ENCODE measurements at regions of chr5 and their contacts with region 1.

Region 1: DNA sequence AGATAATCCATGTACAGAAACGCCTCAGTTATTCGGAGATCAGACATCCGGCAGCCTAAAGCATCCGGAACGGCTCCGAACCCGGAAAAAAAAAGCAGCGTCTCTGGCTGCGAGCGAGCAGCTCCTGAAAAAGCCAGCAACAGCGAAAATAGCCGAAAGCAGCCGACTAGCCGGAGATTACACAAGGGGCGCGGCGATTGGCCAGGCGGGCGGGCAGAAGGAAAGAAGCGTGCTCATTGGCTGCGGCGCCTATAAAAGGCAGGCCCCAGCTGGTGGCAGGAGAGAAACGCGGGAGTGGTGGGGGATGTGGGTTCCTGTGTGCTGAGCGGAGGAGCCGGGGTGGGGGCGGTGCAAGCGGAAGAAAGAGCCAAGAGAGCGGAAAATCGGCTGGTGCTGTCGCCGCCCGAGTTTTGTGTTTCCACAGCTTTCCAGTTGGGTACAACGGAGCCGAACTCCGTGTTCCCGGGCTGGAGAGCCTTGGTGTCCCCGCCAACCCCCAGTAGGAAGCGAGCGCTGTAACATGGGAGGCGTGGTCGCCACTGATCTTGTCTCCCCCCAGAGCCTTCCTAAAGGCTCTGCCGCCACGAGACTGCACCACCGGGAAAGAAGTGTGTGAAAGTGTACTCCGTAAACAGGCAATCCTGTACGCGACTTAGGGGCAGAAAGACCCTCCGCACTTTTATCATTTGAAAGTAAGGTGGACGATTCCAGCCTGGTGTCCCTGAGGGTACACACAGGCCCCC is at the start of gene ARL15:
- DNase-seq: peak; percentile 93 to 98
- H3K4me3 ChIP-seq: peak within 1 kb of the TSS; percentile 77 to 84
- H3K27ac ChIP-seq: peak within 1 kb of the TSS; percentile 71 to 75
- H3K4me1 ChIP-seq: peaks cover 0 to 7% of the 10 kb centered on the region in 2 donors
- H3K27me3 ChIP-seq: no peaks in the 10 kb centered on the region
- CTCF ChIP-seq: no peak
- total RNA-seq, gene ARL15: 12.5 TPM

Region 2: DNA sequence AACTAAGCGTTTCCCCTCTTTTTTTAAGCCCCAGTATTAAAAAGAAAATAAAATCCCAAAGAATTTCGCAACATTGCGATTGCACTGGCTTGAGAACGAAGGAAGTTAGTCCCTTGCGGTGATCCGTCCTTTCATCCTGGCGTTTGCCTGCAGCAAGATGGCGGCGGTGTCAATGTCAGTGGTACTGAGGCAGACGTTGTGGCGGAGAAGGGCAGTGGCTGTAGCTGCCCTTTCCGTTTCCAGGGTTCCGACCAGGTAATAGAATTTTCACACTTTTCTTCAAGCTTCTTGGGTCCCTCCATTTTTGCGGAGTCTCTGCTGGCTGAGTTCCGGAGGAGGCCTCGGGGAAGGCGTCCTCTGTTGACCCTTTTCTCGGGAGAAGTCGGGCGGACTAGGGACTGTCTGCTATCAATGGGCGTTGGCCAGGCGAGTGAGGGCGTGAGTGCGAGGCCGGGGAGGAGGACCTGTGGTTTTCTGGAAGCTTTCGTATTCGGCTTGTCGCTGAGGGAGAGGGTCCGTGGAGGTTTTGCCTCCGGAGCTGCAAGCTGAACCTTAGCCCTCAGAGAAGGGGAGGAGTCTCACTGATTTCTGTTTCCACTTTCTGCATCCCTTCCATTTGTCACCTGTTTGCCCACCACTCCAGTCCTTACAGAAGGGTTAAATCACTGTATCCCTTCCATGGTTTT is 750.0 kb before region 1 on chr5 and contains the start of gene NDUFS4:
- intact Hi-C with region 1: loop called (anchors 10 kb)
- DNase-seq: peak; percentile 16 to 89
- H3K4me3 ChIP-seq: peak within 1 kb of the TSS; percentile 78 to 83
- H3K27ac ChIP-seq: peak within 1 kb of the TSS; percentile 73 to 80
- H3K4me1 ChIP-seq: peaks cover 0 to 10% of the 10 kb centered on the region in 2 donors
- H3K27me3 ChIP-seq: no peaks in the 10 kb centered on the region
- CTCF ChIP-seq: no peak
- total RNA-seq, gene NDUFS4: 3.0 TPM

Region 3: GRCh38 chr5:54080831-54081230 is 229.8 kb before region 1 on chr5:
- intact Hi-C with region 1: no loop called
- DNase-seq: no peak
- H3K4me3 ChIP-seq: no peak overlapping the region
- H3K27ac ChIP-seq: no peak overlapping the region
- H3K4me1 ChIP-seq: no peaks in the 10 kb centered on the region
- H3K27me3 ChIP-seq: no peaks in the 10 kb centered on the region
- CTCF ChIP-seq: no peak

Region 4: GRCh38 chr5:54387659-54388232 is 77.1 kb after region 1 on chr5:
- intact Hi-C with region 1: loop called (anchors 2 kb)
- DNase-seq: no peak
- H3K4me3 ChIP-seq: peak overlapping the region in 1 of 2 donors; percentile 0
- H3K27ac ChIP-seq: peak overlapping the region; percentile 39 to 70
- H3K4me1 ChIP-seq: peaks cover 4 to 10% of the 10 kb centered on the region in 2 donors
- H3K27me3 ChIP-seq: no peaks in the 10 kb centered on the region
- CTCF ChIP-seq: no peak

Region 5: DNA sequence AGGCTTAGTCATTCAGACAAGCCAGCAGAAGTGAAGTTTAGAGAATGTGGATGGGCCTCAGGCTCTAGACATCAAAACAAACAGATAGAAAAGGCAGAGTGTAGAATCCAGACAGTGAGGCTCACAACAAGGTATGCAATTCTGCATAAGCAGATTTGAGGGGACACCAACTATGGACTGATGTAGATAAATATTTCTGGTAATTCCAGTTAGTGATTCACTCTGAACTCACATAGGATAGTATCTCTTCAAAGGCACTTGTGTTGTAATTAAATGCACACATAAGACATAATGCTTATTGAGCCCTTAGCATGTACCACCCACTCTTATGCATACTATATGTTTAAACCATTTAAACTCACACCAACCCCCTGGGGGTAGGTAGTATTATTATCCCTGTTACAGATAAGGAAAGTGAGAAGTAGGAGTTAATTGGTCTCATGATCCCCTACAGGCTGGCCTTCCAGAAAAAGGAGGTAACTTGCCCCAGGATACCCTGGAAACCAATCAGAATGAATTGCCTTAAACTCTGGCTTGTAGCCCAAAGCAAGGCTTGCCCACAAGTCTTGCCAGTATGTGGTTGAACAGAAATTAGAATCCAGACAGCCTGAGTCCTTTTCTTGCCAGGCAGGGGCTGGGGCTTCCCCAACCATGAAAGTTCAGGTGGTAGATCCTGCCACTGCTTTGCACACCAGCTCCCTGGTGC is 105.4 kb after region 1 on chr5:
- intact Hi-C with region 1: loop called (anchors 5 kb)
- DNase-seq: no peak
- H3K4me3 ChIP-seq: no peak overlapping the region
- H3K27ac ChIP-seq: no peak overlapping the region
- H3K4me1 ChIP-seq: no peaks in the 10 kb centered on the region
- H3K27me3 ChIP-seq: no peaks in the 10 kb centered on the region
- CTCF ChIP-seq: no peak